Naive thymus-derived CD4-positive, alpha-beta T cell (primary cell): ENCODE measurements at regions of chr7 and their contacts with region 1.

Region 1: DNA sequence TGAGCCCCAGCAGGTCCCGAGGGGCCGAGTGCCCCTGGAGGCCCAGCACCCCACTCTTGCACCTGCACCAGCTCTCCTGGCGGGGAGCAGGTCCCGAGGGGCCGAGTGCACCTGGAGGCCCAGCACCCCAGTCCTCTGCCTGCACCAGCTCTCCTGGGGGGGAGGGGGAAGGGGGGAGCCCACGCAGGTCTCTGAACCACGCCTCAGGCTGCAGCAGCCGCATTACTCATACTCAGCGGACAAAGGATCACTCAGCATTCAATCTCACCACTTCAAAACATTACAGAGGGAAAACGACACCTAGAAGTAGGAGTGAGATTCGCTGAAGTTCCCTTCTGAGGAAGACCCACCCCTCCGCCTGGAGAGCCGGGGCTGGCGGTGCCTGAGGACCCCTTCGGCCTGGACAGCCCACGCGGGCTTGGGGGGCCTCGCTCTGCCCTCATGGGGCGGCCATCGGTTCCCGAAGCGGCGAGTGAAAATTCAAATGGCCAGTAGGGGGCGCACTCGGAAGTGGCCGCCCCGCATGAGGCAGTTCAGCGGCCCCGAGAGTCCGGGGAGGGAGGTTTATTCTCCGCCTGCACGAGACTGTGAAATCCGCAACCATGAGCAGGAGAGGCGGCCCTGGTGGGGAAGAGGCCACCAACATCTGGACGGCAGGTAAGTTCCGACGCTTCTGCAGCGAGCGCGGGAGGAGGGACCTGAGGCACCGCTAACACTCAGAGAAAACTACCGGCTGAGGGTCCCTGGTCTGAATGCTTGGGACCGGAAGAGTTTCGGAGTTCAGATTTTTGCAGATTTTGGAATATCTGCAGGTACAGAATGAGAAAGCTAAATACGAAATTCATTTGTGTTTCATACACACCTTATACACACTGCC is 1.1 kb upstream of the GPER1 start:
- DNase-seq: peak; percentile 44 to 83 (median 71)
- ATAC-seq: peak; percentile 87
- H3K4me3 ChIP-seq: peak overlapping the region; percentile 50
- H3K4me3 Mint-ChIP-seq: peak overlapping the region; percentile 59 to 86 (median 80)
- H3K27ac ChIP-seq: no peak overlapping the region
- H3K27ac Mint-ChIP-seq: peak overlapping the region in 1 of 9 donors; percentile 82
- H3K4me1 ChIP-seq: peaks cover 3 to 6% of the 10 kb centered on the region in 2 donors
- H3K4me1 Mint-ChIP-seq: peaks cover 7 to 20% (median 12%) of the 10 kb centered on the region in 7 donors
- H3K27me3 ChIP-seq: no peaks in the 10 kb centered on the region
- H3K27me3 Mint-ChIP-seq: peaks cover 0 to 3% (median 0%) of the 10 kb centered on the region in 5 donors

Region 2: GRCh38 chr7:1015196-1016121 is 71.4 kb before region 1 on chr7:
- CTCF ChIA-PET with region 1: no interaction called
- POLR2A ChIA-PET with region 1: no interaction called
- intact Hi-C with region 1: no loop called
- DNase-seq: no peak
- ATAC-seq: no peak
- H3K4me3 ChIP-seq: no peak overlapping the region
- H3K4me3 Mint-ChIP-seq: peak overlapping the region in 1 of 10 donors; percentile 32
- H3K27ac ChIP-seq: no peak overlapping the region
- H3K27ac Mint-ChIP-seq: peak overlapping the region in 2 of 9 donors; percentile 10 to 21
- H3K4me1 ChIP-seq: peaks cover 5 to 10% of the 10 kb centered on the region in 2 donors
- H3K4me1 Mint-ChIP-seq: peaks cover 13 to 31% (median 23%) of the 10 kb centered on the region in 7 donors
- H3K27me3 ChIP-seq: no peaks in the 10 kb centered on the region
- H3K27me3 Mint-ChIP-seq: no peaks in the 10 kb centered on the region

Region 3: DNA sequence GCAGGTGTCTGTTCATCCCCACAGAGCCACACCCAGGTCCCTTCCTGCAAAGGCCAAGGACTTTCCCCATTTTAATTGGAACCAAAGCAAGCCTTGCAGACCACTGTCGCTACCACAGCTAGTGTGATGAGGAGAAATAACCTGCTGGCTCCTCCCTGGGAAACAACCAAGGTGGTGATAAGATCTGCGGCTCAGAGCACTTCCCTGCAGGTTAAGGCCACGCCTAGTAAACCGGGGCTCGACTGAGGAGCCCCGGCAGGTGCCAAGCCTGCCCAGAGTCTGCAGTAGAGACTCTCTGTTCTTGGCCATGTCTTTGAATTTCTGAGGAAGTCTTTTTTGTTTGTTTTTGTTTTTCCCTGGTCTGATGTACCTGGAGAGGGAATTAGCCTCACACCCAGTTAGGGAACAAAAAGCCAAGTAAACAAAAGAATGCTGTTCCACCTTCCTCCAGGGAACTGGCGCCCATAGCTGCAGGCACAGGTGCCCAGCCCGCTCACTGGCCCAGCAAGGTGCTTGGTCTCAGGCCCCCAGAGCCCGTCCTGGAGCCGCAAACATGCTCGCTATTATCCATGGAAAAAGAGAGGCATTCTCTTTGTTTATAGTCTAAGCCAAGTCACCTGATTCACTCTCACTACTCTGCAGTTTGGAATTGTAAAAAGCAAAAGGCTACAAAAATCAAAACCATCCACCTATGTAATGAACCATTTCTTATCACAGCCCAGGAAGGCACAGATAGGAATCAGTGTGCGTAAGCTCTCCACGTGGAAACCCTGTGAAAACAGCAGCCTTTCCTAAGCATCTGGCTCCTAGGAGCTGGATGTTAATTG is 39.9 kb before region 1 on chr7:
- CTCF ChIA-PET with region 1: no interaction called
- POLR2A ChIA-PET with region 1: no interaction called
- intact Hi-C with region 1: no loop called
- DNase-seq: peak in 6 of 9 donors; percentile 52 to 82 (median 69)
- ATAC-seq: peak; percentile 48
- H3K4me3 ChIP-seq: peak overlapping the region; percentile 19
- H3K4me3 Mint-ChIP-seq: peak overlapping the region; percentile 88 to 94 (median 91)
- H3K27ac ChIP-seq: peak overlapping the region; percentile 26
- H3K27ac Mint-ChIP-seq: peak overlapping the region in 6 of 9 donors; percentile 14 to 76 (median 54)
- H3K4me1 ChIP-seq: peaks cover 51 to 60% of the 10 kb centered on the region in 2 donors
- H3K4me1 Mint-ChIP-seq: peaks cover 39 to 80% (median 70%) of the 10 kb centered on the region in 7 donors
- H3K27me3 ChIP-seq: no peaks in the 10 kb centered on the region
- H3K27me3 Mint-ChIP-seq: no peaks in the 10 kb centered on the region

Region 4: GRCh38 chr7:1169409-1170368 is 82.9 kb after region 1 on chr7:
- CTCF ChIA-PET with region 1: interaction called, 20 read pairs
- POLR2A ChIA-PET with region 1: interaction called, 4 read pairs
- intact Hi-C with region 1: loop called in 1 of 2 experiments (anchors 1 kb)
- DNase-seq: peak; percentile 81 to 95 (median 94)
- ATAC-seq: peak; percentile 100
- H3K4me3 ChIP-seq: peak overlapping the region; percentile 63
- H3K4me3 Mint-ChIP-seq: peak overlapping the region; percentile 82 to 92 (median 89)
- H3K27ac ChIP-seq: peak overlapping the region; percentile 64
- H3K27ac Mint-ChIP-seq: peak overlapping the region in 8 of 9 donors; percentile 88 to 98 (median 94)
- H3K4me1 ChIP-seq: peaks cover 5 to 8% of the 10 kb centered on the region in 2 donors
- H3K4me1 Mint-ChIP-seq: peaks cover 8 to 16% (median 13%) of the 10 kb centered on the region in 7 donors
- H3K27me3 ChIP-seq: no peaks in the 10 kb centered on the region
- H3K27me3 Mint-ChIP-seq: no peaks in the 10 kb centered on the region